PC-9 (cell line): ENCODE measurements at regions of chr2 and their contacts with region 1.

Region 1: DNA sequence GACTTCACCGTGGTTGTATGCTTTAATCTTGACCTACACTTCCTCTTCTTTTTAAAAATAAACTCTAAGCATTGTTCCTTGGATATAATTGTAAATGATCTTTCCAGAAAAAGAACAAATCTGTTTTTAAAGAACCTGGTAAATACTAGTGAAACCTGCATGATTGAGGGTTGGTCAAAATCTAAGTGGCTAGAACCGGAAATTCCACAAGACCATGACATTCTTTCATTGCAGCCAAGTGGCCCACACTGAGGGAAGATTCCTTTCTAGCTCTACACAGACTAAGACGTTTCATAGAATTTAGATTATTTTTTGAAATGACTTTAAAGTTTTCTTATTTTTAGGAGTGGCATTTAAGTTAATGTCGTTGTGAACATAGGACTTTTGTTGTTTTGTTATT is 356.7 kb downstream of the NYAP2 start:
- DNase-seq: no peak
- H3K4me3 ChIP-seq: no peak overlapping the region
- H3K27ac ChIP-seq: no peak overlapping the region
- H3K4me1 ChIP-seq: no peaks in the 10 kb centered on the region
- H3K27me3 ChIP-seq: no peaks in the 10 kb centered on the region
- CTCF ChIP-seq: no peak

Region 2: GRCh38 chr2:225693259-225693658 is 62.9 kb before region 1 on chr2:
- CTCF ChIA-PET with region 1: no interaction called
- POLR2A ChIA-PET with region 1: no interaction called
- intact Hi-C with region 1: no loop called
- DNase-seq: no peak
- H3K4me3 ChIP-seq: no peak overlapping the region
- H3K27ac ChIP-seq: no peak overlapping the region
- H3K4me1 ChIP-seq: no peaks in the 10 kb centered on the region
- H3K27me3 ChIP-seq: no peaks in the 10 kb centered on the region
- CTCF ChIP-seq: no peak

Region 3: DNA sequence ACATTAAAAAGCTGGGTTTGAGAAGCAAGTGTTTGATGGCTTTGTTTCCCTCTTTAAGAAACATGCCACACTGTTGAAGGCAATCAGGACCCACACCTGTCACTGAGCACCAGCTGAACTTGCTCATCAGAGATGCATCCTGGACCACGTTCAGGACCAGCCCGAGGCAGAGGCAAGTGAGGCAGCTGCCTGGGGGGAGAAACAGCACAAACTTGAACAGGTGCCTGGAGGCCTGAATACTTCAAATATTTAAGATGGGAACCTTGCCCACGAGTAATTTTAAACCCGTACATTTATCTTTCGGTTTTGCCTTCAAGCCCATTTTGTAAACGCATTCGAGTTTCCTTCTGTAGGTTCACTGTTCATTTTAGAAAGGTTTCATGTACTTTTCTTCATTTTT is 64.6 kb after region 1 on chr2:
- CTCF ChIA-PET with region 1: no interaction called
- POLR2A ChIA-PET with region 1: no interaction called
- intact Hi-C with region 1: no loop called
- DNase-seq: no peak
- H3K4me3 ChIP-seq: no peak overlapping the region
- H3K27ac ChIP-seq: no peak overlapping the region
- H3K4me1 ChIP-seq: no peaks in the 10 kb centered on the region
- H3K27me3 ChIP-seq: no peaks in the 10 kb centered on the region
- CTCF ChIP-seq: no peak

Region 4: DNA sequence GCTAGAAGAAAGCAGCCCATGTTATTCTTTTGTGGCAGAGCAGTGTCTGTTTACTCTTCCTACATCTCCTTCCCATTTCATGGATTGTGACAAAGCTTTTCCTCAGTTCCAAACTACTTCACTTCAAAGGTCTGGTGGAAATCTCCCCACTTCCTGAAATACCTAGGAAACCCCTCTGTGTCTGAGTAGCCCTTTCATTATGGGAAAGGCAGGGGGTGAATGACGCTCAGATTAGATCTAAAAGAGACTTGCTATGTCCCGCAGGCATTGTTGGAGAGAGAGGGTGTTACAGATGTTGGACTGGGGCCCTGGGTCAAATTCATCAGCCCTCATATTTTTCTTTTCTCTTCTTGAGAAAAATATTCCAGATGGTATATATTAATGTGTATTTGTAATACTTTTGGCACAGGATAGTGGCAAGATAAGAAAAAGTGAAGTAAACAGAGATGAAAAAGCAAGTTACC is 368.4 kb after region 1 on chr2:
- CTCF ChIA-PET with region 1: no interaction called
- POLR2A ChIA-PET with region 1: no interaction called
- intact Hi-C with region 1: no loop called
- DNase-seq: no peak
- H3K4me3 ChIP-seq: no peak overlapping the region
- H3K27ac ChIP-seq: no peak overlapping the region
- H3K4me1 ChIP-seq: peaks cover 9% of the 10 kb centered on the region
- H3K27me3 ChIP-seq: no peaks in the 10 kb centered on the region
- CTCF ChIP-seq: no peak

Region 5: GRCh38 chr2:226274143-226274542 is 517.9 kb after region 1 on chr2:
- CTCF ChIA-PET with region 1: no interaction called
- POLR2A ChIA-PET with region 1: no interaction called
- intact Hi-C with region 1: loop called (anchors 10 kb)
- DNase-seq: no peak
- H3K4me3 ChIP-seq: no peak overlapping the region
- H3K27ac ChIP-seq: no peak overlapping the region
- H3K4me1 ChIP-seq: no peaks in the 10 kb centered on the region
- H3K27me3 ChIP-seq: no peaks in the 10 kb centered on the region
- CTCF ChIP-seq: no peak

Region 6: GRCh38 chr2:226478109-226478809 is 722.1 kb after region 1 on chr2:
- CTCF ChIA-PET with region 1: no interaction called
- POLR2A ChIA-PET with region 1: no interaction called
- intact Hi-C with region 1: no loop called
- DNase-seq: peak; percentile 48 to 77
- H3K4me3 ChIP-seq: no peak overlapping the region
- H3K27ac ChIP-seq: no peak overlapping the region
- H3K4me1 ChIP-seq: peaks cover 24% of the 10 kb centered on the region
- H3K27me3 ChIP-seq: no peaks in the 10 kb centered on the region
- CTCF ChIP-seq: no peak